Mucosa of descending colon (tissue), 3 donors: ENCODE measurements at regions of chr19 and their contacts with region 1.

Region 1: GRCh38 chr19:32570081-32570785 is 10.8 kb upstream of the PDCD5 start:
- DNase-seq: peak; percentile 14 to 74 (median 48)
- ATAC-seq: peak; percentile 73
- H3K4me3 ChIP-seq: no peak overlapping the region
- H3K4me1 ChIP-seq: no peaks in the 10 kb centered on the region
- CTCF ChIP-seq: no peak

Region 2: DNA sequence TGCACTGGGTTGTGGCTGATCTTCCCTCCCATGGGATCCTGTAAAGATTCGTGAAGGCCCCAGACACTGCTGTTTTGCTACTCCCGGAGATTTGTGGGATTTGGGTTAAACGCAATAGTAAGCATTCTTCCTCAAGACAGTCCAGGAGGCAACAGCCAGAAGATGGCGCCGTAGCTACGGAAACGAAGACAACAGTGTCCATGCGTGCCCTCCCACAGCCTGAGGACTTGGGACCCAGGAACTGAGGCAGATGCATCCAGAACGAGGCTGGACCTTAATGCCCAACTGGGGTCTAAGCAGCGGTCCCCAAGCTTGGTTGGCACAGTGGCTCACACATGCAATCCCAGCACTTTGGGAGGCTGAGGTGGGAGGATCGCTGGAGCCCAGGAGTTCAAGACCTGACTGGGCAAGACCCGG is 282.4 kb before region 1 on chr19:
- intact Hi-C with region 1: loop called in 1 of 2 experiments (anchors 2 kb)
- DNase-seq: peak; percentile 61 to 88 (median 77)
- ATAC-seq: peak; percentile 73
- H3K4me3 ChIP-seq: no peak overlapping the region
- H3K4me1 ChIP-seq: no peaks in the 10 kb centered on the region
- CTCF ChIP-seq: no peak

Region 3: DNA sequence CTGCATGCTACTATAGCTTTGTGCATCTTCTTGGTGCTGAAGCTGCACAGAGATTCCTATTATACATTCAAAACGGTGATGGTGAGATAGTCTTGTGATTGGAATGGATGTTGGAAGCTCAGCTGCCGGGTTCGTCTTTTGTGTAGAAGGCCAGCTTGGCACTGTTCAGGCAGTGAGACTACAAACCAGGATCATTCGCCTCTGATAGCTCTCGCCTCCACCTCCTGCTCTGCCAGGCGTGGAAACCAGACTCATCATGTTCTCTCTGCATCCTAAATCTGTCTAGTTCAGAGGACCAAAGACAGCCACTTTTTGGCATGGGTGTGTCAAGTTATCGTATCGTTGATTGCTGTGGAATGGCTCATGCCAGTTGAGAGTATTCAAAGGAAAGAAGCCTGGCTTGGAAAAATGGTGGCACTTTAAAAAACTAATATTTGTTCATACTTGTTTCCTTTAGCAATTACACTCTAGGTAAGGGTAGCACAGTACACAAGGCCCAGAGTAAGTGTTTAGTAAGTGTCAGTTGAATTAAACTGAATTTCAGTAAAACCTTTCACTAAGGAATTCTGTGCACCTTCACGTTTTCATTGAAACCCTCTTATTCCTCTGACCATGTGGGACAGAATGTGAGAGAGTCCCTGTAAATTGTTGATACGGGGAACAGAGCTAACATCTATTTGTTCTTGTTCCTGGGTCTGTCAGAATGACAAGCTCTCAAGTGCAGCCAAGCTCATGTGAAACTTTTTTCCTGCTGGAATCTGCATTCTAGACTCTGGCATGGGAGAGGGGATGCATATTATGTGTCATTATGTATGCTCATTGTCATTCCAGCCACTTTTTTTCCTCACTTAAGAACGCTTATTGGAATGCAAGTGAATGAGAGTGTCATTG is 94.8 kb before region 1 on chr19:
- intact Hi-C with region 1: no loop called
- DNase-seq: no peak
- ATAC-seq: no peak
- H3K4me3 ChIP-seq: no peak overlapping the region
- H3K4me1 ChIP-seq: no peaks in the 10 kb centered on the region
- CTCF ChIP-seq: no peak

Region 4: GRCh38 chr19:32748497-32748896 is 178.3 kb after region 1 on chr19:
- intact Hi-C with region 1: no loop called
- DNase-seq: peak in 1 of 3 donors; percentile 5
- ATAC-seq: no peak
- H3K4me3 ChIP-seq: no peak overlapping the region
- H3K4me1 ChIP-seq: no peaks in the 10 kb centered on the region
- CTCF ChIP-seq: no peak